Activated T-helper 2 cell treated with anti-CD3 and anti-CD28 coated beads, Interferon-gamma antibody, Interleukin-2, Interleukin-4, amounts not matched to agents 10 μg/mL and 5 μg/mL and 100 μg/mL, durations not matched to agents 14 hours and 24 hours and 36 hours (primary cell): ENCODE measurements at regions of chr18 and their contacts with region 1.

Region 1: DNA sequence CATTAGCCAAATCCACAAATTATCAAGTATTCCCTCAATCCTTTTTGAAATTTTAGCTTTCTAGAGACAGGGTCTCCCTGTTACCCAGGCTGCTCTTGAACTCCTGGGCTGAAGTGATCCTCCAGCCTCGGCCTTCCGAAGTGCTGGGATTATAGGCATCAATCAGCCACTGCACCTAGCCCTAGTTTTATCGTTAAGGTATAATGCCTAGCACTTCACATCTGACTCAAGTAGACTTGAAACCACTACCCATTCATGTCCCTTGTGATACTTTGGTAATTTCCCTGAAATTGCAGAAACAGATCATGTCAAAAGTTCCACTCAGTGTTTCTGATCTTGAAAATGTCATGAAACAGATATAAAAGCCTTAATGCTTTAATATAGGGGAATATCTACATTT is 26.3 kb downstream of the MEX3C start:
- DNase-seq: no peak
- H3K4me3 Mint-ChIP-seq: peak overlapping the region; percentile 56
- H3K27ac Mint-ChIP-seq: peak overlapping the region; percentile 90
- H3K4me1 Mint-ChIP-seq: peaks cover 63% of the 10 kb centered on the region
- H3K27me3 Mint-ChIP-seq: no peaks in the 10 kb centered on the region

Region 2: GRCh38 chr18:51074605-51075004 is 96.6 kb before region 1 on chr18:
- intact Hi-C with region 1: no loop called
- DNase-seq: no peak
- H3K4me3 Mint-ChIP-seq: no peak overlapping the region
- H3K27ac Mint-ChIP-seq: no peak overlapping the region
- H3K4me1 Mint-ChIP-seq: peaks cover 17% of the 10 kb centered on the region
- H3K27me3 Mint-ChIP-seq: no peaks in the 10 kb centered on the region

Region 3: GRCh38 chr18:51110073-51110803 is 61.0 kb before region 1 on chr18:
- intact Hi-C with region 1: loop called (anchors 2 kb)
- DNase-seq: peak; percentile 51
- H3K4me3 Mint-ChIP-seq: no peak overlapping the region
- H3K27ac Mint-ChIP-seq: no peak overlapping the region
- H3K4me1 Mint-ChIP-seq: peaks cover 18% of the 10 kb centered on the region
- H3K27me3 Mint-ChIP-seq: no peaks in the 10 kb centered on the region

Region 4: GRCh38 chr18:51153659-51154371 is 17.4 kb before region 1 on chr18:
- intact Hi-C with region 1: loop called (anchors 1 kb)
- DNase-seq: peak; percentile 30
- H3K4me3 Mint-ChIP-seq: peak overlapping the region; percentile 76
- H3K27ac Mint-ChIP-seq: peak overlapping the region; percentile 96
- H3K4me1 Mint-ChIP-seq: peaks cover 48% of the 10 kb centered on the region
- H3K27me3 Mint-ChIP-seq: no peaks in the 10 kb centered on the region

Region 5: DNA sequence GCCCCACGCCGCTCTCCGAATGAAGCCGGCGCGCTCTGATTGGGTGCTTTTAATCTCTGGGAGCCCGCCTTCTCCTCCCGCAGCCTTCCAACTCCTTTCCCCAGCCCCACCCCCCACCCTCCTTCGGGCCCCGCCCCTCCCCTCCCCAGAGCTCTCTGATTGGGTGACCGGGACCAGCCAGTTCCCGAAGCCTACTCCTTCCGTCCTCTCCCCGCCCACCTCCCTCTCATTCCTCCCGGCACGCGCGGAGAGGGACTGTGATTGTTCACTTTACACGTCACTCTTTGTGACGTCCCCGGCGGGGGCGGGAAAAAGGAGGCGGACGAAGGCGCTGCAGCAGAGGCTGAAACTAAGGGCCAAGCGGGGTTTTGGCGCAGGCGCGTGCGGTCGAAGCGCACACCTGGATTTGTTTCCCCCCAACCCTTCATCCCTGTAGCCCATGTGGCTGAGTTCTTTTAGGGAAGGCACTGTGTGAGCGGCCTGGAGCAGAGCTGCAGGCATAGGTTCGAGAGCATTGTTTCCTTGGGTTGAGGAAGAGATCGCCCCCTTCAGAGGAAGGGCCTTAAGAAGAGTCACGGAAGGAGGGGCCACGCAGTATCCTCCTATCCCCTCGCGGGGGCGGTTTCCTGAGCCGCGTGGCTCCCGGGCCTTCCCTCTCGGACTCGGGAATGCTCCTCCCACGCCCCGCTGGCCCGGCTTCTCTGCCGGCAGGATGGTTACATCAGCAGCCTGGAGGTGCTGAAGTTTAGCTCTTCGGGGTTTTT is 26.6 kb after region 1 on chr18 and contains the start of gene MEX3C:
- intact Hi-C with region 1: loop called (anchors 1 kb)
- DNase-seq: peak; percentile 99
- H3K4me3 Mint-ChIP-seq: peak within 1 kb of the TSS; percentile 95
- H3K27ac Mint-ChIP-seq: peak within 1 kb of the TSS; percentile 96
- H3K4me1 Mint-ChIP-seq: peaks cover 27% of the 10 kb centered on the region
- H3K27me3 Mint-ChIP-seq: no peaks in the 10 kb centered on the region
- total RNA-seq, gene MEX3C: 48.6 and 49.3 TPM in 2 replicates

Region 6: DNA sequence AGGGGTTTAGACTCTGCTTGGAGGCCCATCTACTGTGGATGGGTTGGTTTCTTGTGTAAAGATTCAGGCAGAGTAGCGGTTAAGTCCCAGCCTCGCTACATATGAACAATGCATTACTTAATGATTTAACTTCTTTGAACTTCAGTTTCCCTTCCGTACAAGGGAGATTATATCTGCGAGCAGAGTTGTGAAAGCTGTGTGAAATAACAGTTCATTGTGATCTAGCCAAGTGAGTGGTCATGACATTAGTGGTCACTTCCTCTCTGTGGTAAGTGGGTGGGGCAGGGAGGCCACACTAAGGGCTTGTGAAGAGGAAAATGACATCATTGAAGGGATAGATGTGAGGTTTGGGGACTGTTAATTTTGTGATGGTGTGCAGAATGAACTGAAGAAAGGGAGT is 40.3 kb after region 1 on chr18:
- intact Hi-C with region 1: loop called (anchors 1 kb)
- DNase-seq: peak; percentile 71
- H3K4me3 Mint-ChIP-seq: no peak overlapping the region
- H3K27ac Mint-ChIP-seq: peak overlapping the region; percentile 31
- H3K4me1 Mint-ChIP-seq: peaks cover 26% of the 10 kb centered on the region
- H3K27me3 Mint-ChIP-seq: no peaks in the 10 kb centered on the region

Region 7: DNA sequence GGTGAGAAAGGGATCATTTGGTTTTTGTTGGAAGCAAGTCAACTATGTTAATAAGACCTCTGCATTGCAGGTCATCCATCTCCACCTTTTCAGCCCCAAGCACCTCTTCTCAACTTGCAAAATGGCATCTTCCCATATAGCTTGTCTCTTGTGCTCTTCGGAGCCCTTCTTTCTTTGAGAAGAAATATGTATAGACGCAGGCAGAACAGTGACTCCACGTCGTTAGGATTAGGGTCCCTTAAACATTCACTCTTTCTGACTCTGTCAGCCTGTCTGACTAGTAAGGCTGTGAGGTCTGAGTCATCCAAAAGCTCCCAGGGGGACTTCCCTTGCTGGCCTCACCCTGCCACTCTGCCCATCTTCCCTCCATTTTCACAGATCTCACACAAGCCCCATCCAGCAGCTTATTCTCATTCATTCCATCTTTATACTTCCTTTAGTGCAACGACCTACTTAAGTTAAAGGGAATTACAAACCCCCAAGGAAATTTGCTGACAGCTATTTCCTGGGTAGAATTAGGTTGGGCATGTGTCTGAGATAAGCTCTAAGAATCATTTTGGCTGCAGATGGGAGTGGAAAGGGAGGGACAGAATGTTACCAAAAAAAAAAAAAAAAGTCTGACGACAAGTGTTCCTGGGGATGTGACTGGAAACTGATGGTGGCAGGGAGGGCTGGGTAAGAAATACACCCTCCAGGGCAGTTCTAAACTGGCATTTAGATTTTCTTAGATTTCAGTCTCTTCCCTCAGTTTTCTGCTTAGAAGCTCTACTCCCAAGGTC is 64.0 kb after region 1 on chr18:
- intact Hi-C with region 1: loop called (anchors 5 kb)
- DNase-seq: no peak
- H3K4me3 Mint-ChIP-seq: no peak overlapping the region
- H3K27ac Mint-ChIP-seq: peak overlapping the region; percentile 19
- H3K4me1 Mint-ChIP-seq: peaks cover 22% of the 10 kb centered on the region
- H3K27me3 Mint-ChIP-seq: no peaks in the 10 kb centered on the region

Region 8: DNA sequence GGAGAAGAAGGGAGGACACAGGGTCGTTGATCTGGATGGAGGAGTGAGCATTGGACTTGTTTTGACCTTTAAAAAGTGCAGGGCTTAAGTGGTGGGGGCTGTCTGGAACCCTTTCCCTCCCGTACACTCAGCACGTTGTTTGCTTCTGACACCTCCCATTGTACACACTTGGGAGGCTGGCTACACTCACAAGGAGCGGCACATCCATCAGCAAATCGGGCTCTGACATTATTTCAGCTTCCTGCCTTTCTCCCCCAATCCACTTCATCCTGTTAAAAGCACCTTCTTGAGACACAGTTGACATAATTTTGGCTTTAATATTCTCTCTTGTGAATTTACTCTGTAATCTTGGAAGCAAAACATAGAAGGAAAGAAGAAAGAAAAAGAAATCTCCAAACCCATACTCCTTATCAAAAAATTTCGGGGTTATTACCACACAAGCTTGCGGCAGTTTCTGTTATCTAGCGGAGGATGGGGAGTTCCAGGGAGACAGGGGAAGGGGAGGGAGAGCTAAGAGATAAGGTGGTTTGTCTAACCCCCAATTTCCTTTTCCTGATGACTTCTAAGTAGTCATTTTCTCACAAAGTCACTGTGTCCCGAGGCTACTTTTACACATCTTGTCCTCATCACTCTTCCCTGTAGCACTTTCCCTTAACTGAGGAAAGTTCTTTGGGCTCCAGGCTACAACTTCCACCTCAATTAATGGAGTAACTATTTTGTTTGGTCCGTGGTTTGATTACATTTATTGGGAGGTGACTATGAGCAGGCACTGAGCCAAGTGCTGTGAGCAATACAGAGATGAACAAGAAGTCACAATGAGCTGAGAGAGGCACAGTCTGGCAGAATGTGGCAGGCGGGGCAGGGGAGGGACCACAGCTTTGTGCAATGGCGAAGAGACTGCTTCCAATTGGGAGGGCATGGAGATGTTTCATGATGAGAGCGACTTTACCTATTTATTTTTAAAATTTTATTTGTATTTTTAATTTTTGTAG is 266.4 kb after region 1 on chr18:
- intact Hi-C with region 1: loop called (anchors 5 kb)
- DNase-seq: no peak
- H3K4me3 Mint-ChIP-seq: peak overlapping the region; percentile 37
- H3K27ac Mint-ChIP-seq: no peak overlapping the region
- H3K4me1 Mint-ChIP-seq: peaks cover 28% of the 10 kb centered on the region
- H3K27me3 Mint-ChIP-seq: peaks cover 39% of the 10 kb centered on the region